Astrocyte of the cerebellum (primary cell): ENCODE measurements at regions of chr2 and their contacts with region 1.

Region 1: DNA sequence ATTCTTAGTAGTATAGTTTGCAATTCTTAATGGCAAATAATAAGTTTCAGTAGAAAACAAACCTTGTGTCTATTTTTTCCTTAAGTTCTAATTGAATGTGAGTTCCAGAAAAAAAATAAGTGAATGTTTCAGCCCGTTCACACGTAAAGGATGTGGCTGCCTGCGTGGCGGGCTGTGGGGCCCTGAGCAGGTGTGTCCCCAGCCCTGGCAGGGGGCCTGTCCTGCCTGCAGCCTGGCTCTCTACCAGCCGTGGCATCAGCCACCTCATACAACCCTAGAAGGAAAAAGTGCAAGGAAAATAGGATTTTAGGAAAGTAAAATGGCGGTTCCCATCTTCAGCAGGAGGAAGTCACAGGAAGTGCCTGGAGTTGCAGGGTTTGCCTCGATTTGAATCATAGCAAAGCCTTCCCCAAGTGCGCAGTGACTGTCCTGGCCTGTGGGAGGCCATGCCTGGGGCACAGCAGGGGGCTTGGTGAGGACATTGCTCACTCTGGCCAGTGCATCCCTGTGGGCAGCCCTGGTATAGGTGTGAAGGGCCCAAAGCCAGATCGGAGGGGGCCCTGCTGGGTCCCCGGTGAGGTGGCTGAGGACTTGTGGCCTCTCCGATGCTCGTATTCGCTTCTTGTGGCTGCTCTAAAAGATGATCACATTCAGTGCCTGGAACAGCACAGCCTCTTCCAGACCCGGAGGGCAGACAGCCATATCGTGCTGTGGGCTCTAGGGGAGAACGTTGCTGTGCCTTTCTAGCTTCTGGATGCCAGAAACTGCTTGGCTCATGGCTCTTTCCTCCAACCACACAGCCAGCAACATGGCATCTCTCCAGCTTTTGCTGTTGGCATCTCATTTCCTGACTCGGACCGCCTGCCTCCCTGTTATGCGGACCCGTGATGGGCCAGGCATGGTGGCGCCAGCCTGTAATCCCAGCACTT is 12.6 kb downstream of the DTYMK start:
- DNase-seq: peak; percentile 50
- H3K4me3 ChIP-seq: no peak overlapping the region
- CTCF ChIP-seq: no peak

Region 2: DNA sequence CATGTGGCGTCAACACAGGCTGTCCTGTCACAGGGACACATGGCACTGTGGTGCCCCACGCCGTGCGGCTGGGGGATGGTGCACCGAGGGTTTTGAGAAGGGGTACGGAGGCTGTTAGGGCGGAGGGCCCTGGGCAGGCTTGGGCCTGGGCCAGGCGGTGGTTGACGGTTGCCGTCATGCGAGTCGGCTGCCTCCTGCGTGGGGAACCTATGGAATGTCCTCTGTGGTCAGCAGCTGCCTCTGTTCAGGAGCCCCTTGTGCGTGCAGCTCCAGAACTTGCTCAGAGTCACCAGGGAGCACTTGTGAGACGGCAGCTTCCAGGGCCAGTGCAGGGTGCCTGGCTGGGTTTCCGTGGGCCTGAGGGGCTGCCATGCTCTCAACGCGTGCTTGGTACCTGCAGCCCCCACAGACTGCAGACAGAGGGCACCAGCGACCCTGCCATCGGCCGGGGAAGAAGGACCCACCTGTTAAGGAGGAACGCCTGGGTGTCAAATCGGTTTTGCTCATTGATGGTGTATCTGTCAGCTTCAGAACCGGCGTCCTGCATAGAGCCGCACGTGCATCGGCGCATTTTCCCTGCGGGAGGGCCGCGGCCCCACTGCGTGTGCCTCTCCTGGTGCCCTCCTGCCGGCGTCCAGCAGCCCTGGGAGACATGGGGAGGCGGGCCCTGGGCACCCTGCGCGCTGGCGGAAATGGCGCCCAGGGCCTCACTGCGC is 50.4 kb after region 1 on chr2:
- in situ Hi-C with region 1: loop called (anchors 10 kb)
- DNase-seq: no peak
- H3K4me3 ChIP-seq: no peak overlapping the region
- CTCF ChIP-seq: peak; percentile 27